Calu3 (cell line): ENCODE measurements at regions of chr13 and their contacts with region 1.

Region 1: DNA sequence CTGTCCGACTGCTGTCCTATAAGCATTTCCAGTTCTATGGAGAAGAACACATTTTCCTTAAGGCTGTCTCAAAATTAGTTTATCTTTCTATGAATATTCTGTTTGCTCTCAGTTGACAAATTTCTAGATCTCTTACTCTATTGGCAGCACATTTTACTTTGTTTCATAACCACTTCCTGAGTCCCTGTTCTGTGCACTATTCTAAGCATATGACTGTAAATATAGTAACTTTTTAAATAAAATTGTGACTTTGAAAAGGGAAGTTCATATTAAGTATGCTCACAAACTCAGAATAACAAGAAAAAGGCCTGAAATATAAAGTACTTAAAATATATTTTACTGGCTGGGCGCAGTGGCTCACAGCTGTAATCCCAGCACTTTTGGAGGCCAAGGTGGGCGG is 56.5 kb upstream of the HTR2A start:
- DNase-seq: no peak
- H3K4me3 Mint-ChIP-seq: no peak overlapping the region
- H3K27ac Mint-ChIP-seq: no peak overlapping the region
- H3K4me1 Mint-ChIP-seq: no peaks in the 10 kb centered on the region
- H3K27me3 Mint-ChIP-seq: no peaks in the 10 kb centered on the region
- CTCF ChIP-seq: no peak

Region 2: GRCh38 chr13:46905247-46905646 is 48.1 kb before region 1 on chr13:
- CTCF ChIA-PET with region 1: no interaction called
- intact Hi-C with region 1: no loop called
- DNase-seq: no peak
- H3K4me3 Mint-ChIP-seq: no peak overlapping the region
- H3K27ac Mint-ChIP-seq: no peak overlapping the region
- H3K4me1 Mint-ChIP-seq: peaks cover 10% of the 10 kb centered on the region
- H3K27me3 Mint-ChIP-seq: peaks cover 16% of the 10 kb centered on the region
- CTCF ChIP-seq: no peak

Region 3: DNA sequence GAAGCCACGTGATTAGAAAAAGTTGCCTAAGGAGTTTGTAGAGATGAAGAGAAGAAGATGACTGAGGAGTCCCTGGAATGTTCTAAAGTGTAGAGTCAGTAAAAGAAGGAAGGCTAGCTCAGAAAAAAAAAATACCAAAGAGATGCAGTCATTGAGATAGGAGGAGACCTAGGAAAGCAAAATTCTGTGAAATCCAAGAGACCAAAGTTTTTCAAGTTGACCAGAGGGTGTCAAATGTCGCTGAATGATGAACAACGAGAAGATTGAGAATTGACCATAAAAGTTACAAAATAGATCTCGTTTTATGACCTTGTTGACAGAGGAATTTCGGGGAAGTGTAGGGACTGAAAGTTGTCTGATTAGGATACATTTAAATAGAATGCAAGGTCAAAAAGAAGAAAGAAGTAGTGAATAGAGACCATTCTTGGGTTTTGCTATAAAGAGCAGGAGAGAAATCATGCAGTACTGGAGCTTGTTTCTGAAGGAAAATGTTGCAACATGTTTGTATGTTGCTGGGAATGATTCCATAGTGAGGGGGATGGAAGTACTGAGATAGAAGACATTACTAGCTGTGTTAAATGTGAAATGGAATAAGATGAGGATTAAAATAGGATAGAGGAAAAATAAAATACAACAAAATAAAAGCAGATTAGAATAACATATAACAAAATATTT is 26.3 kb before region 1 on chr13:
- CTCF ChIA-PET with region 1: no interaction called
- intact Hi-C with region 1: loop called (anchors 1 kb)
- DNase-seq: no peak
- H3K4me3 Mint-ChIP-seq: no peak overlapping the region
- H3K27ac Mint-ChIP-seq: no peak overlapping the region
- H3K4me1 Mint-ChIP-seq: no peaks in the 10 kb centered on the region
- H3K27me3 Mint-ChIP-seq: no peaks in the 10 kb centered on the region
- CTCF ChIP-seq: no peak

Region 4: DNA sequence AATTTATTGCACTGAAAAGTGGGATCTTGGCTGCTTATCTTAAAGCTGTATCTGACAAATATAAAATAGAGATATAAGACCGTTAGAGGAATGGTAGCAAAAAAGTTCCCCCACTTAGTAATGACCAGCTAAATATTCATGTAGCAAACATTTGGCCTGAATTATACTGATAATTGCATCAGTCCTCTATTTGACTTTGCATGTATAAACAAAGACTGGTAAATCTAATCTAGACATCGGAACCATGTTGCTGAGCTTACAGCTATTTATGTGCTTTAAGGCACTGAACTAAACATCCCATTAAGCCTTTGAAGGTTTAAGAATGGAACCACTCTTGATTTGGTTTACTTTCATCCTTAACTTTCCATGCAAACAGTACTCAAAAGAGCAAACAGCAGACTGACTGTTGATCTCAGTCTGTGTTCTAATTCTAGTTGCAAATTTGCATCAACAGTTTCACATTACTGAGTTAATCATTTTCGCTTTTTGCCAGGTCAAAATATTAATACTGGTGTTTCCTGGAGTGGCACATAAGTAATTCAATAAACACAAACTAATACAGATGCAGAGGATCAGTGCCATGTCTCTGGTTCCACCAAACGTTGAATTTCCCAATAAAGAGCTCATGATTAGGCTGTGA is 147.0 kb after region 1 on chr13:
- CTCF ChIA-PET with region 1: no interaction called
- intact Hi-C with region 1: no loop called
- DNase-seq: no peak
- H3K4me3 Mint-ChIP-seq: no peak overlapping the region
- H3K27ac Mint-ChIP-seq: no peak overlapping the region
- H3K4me1 Mint-ChIP-seq: no peaks in the 10 kb centered on the region
- H3K27me3 Mint-ChIP-seq: no peaks in the 10 kb centered on the region
- CTCF ChIP-seq: no peak

Region 5: DNA sequence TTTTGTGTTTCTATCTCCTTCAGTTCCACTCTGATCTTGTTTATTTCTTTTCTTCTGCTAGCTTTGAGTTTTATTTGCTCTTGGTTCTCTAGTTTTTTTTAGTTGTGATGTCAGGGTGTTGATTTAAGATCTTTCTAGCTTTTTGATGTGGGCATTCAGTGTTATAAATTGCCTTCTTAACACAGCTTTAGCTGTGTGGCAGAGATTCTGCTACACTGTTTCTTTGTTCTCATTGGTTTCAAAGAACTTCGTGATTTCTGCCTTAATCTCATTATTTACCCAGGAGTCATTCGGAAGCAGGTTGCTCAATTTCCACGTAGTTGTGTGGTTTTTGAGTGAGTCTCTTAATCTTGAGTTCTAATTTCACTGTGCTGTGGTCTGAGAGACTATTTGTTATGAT is 195.2 kb after region 1 on chr13:
- CTCF ChIA-PET with region 1: no interaction called
- intact Hi-C with region 1: no loop called
- DNase-seq: no peak
- H3K4me3 Mint-ChIP-seq: no peak overlapping the region
- H3K27ac Mint-ChIP-seq: no peak overlapping the region
- H3K4me1 Mint-ChIP-seq: peaks cover 24% of the 10 kb centered on the region
- H3K27me3 Mint-ChIP-seq: no peaks in the 10 kb centered on the region
- CTCF ChIP-seq: no peak